ENCODE measurements at regions of chr5 and their contacts with region 1.

Region 1: DNA sequence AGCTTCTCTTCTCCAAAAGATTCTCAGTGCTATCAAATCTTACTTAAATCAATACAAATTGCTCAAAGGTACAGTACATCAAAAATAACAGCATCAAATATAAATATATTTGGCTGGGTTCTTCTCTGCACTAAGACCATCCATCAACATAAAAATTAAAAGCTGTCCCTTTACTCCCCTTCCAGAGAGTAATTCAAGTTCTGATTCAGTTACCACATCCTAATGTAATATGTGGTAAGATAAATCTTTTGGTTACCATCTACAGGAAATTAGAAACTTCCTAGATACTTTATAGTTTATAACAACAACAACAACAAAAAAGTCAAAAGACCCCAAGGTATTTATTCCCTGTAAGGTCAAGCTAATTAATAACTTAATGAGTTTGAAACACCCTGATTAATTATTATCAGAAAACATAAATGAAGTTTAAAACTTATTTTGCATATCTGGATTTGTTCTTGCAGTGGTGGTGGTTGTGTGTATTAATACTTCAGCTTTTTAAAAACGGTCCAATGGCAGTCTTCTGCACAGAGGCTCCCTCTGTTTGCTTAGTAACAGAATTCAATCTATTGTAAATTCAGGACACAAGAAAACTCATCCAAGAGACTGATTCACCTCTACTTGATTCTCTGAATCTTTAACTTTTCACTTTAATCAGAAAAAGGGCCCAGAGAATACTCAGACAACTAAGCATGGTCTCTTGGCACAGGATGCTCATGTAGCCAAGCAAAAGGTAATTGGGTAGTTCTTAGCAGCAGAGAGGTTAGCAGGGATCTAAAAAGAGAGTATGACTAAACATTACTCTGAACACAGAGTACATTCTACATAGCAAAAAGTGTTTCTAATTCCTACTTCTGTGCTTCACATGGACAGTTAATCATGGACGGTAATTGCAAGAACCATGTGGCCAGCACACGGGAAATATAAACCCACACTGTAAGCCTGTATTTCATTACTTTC is 20.1 kb downstream of the DIAPH1 start:
- DNase-seq: no peak
- H3K4me3 ChIP-seq: no peak overlapping the region
- CTCF ChIP-seq: no peak

Region 2: DNA sequence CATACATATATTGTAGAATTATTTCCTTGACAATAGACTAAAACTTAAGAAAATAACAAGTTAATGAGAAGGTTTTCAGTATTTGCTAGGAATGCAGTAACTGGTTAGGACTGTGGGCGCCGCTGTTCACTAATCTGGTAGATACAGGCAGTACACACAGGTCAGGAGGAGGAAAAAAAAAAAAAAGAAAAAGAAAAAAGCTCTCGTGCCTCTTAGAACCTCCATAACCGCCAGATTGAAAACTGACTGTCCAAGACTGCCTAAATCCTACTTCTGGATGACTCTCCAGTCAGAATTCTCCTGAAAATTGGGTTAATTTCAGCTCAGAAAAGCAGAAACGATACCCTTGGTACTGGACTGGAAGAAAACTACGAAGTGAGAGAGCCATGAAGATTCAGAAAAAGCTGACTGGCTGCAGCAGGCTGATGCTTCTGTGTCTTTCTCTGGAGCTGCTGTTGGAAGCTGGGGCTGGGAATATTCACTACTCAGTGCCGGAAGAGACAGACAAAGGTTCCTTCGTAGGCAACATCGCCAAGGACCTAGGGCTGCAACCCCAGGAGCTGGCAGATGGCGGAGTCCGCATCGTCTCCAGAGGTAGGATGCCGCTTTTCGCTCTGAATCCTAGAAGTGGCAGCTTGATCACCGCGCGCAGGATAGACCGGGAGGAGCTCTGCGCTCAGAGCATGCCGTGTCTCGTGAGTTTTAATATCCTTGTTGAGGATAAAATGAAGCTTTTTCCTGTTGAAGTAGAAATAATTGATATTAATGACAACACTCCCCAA is 268.2 kb before region 1 on chr5 and contains the start of gene PCDHGA1:
- CTCF ChIA-PET with region 1: no interaction called
- POLR2A ChIA-PET with region 1: no interaction called
- DNase-seq: no peak
- H3K4me3 ChIP-seq: peak within 1 kb of the TSS; percentile 47
- CTCF ChIP-seq: peak; percentile 42

Region 3: GRCh38 chr5:141507387-141508091 is 91.1 kb before region 1 on chr5:
- CTCF ChIA-PET with region 1: no interaction called
- POLR2A ChIA-PET with region 1: no interaction called
- DNase-seq: peak; percentile 67
- H3K4me3 ChIP-seq: peak overlapping the region; percentile 48
- CTCF ChIP-seq: no peak

Region 4: DNA sequence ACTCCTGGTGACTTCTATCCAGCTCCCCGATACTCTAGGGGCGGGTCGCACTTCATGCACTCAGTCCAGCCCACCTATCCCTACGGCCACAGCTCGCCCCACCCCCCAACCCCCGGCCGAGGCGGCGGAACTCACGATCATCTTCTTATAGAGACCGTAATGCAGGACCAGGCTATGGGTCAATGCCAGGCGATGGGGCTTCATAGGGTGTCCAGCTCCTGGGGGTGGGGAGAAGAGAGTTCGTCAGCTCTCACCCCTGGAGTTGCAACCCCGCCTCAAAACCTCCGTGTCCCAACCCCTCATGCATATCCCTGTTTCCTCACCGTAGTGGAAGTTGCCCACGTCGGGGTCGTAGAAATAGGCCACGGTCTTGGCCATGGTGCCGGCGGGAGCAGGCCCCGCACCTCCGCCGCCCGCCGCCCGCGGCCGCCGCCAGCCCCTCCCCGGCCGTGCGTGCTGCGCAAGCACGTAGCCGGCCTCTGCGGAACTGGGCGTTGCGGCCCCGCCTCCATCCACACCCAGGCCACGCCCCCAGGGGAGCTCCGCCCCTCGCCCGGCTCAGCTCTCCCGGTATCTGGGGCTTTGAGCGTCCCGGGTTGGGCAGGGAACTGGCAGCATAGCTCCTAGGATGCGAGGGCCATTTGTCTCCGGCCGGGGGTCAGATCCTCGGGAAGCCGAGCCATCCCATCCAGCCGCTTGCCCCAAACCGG is 37.9 kb after region 1 on chr5 and contains the starts of genes HDAC3 and RELL2:
- CTCF ChIA-PET with region 1: interaction called, 92 read pairs
- POLR2A ChIA-PET with region 1: no interaction called
- DNase-seq: no peak
- H3K4me3 ChIP-seq: peak within 1 kb of the TSS; percentile 99
- CTCF ChIP-seq: no peak

Region 5: DNA sequence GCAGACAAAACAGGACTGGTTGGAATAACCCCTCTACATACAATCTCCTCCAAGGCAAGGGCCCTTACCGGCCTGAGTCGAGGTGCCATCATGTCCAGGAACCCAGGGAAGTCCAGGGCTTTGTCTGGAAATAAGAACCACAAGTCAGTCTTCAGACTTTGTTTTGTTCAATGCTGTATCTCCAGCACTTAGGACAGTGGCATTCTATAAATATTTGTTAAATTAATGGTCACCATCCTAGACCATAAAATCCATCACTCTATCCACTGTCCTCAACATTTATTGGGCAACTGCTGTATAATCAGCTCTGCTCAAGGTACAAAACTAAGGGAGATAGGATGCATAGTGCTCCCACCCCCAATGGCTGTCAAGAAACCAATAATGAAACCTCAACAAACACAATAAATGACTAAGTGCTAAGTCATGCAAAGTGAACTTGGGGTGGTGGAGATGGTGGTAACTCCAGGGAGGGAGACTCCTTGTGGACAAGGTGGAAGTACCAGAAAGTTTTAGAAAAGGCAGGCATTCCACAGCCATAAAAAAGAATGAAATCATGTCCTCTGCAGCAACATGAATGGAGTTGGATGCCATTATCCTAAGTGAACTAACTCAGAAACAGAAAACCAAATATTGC is 43.1 kb after region 1 on chr5:
- CTCF ChIA-PET with region 1: interaction called, 92 read pairs
- POLR2A ChIA-PET with region 1: no interaction called
- DNase-seq: no peak
- H3K4me3 ChIP-seq: no peak overlapping the region
- CTCF ChIP-seq: peak; percentile 40

Region 6: DNA sequence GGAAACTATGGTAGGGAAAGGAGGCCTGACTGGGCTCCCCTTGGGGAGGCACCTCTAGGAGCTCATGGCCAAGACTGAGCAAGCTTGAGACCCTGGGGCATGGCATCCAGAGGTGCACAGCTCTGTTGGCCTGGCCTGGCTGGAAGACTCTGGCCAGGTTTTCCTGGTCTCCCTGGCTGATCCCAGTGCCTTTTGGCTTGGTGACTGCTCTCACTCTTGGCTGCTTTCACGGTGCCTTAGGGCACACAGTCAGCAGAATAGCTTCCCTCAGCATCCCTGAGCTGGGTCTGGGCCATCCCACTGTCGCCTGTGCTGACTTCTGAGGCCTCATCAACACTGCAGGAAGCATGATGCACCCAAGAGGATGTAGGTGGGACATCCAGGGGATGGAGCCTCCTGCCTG is 311.6 kb after region 1 on chr5:
- CTCF ChIA-PET with region 1: no interaction called
- POLR2A ChIA-PET with region 1: no interaction called
- DNase-seq: no peak
- H3K4me3 ChIP-seq: no peak overlapping the region
- CTCF ChIP-seq: no peak

Measured in AG04449 (cell line).